Activated CD4-positive, alpha-beta T cell treated with anti-CD3 and anti-CD28 coated beads for 36 hours (primary cell): ENCODE measurements at regions of chr14 and their contacts with region 1.

Region 1: DNA sequence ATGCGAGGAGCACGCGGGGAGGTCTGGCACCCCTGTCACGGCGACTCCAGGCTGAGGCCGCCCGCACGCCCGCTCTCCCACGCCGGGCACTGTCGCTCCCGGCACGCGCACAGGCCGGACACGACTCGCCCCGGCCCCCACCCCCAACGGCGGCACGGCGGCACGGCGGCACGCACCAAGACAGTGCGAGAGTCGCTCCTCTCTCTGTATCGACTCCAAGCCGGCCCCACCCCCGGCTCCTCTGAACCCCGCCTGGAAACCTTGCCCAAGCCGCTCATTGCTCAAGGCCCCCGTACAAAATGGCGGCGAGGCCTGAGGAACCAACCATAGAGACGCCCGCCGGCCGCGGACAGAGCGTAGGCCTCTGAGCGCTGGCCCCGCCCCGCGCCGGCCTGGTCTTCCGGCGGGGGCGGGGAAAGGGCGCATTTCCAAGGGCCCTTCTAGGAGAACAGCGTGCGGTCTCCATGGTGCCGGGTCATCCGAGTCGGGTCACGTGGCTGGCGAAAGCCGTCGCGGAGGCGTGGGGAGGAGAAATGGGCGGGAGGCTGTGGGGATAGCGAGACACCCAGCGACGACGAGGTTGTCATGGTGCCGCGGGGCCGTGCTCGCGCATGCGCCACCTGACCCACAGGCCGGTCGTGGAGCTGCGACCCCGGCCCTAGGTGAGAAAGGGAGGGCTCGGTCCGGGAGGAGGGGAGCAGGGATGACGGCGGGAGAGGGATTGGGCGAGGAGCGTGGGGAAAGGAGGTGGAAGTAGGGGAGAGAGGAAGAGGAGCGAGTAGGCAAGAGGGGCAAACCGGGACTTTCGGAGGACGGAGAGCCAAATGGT is at the start of gene CIPC:
- DNase-seq: peak; percentile 100
- ATAC-seq: peak; percentile 91
- H3K4me3 Mint-ChIP-seq: peak within 1 kb of the TSS; percentile 87
- H3K27ac Mint-ChIP-seq: peak within 1 kb of the TSS; percentile 99
- H3K4me1 Mint-ChIP-seq: peaks cover 40% of the 10 kb centered on the region
- H3K27me3 Mint-ChIP-seq: no peaks in the 10 kb centered on the region
- total RNA-seq, gene CIPC: 8.6 to 10.0 TPM

Region 2: GRCh38 chr14:75982266-75983018 is 1115.5 kb before region 1 on chr14:
- CTCF ChIA-PET with region 1: no interaction called
- POLR2A ChIA-PET with region 1: no interaction called
- intact Hi-C with region 1: loop called in 1 of 2 experiments (anchors 10 kb)
- DNase-seq: peak; percentile 86
- ATAC-seq: peak; percentile 62
- H3K4me3 Mint-ChIP-seq: peak overlapping the region; percentile 67
- H3K27ac Mint-ChIP-seq: peak overlapping the region; percentile 78
- H3K4me1 Mint-ChIP-seq: peaks cover 42% of the 10 kb centered on the region
- H3K27me3 Mint-ChIP-seq: no peaks in the 10 kb centered on the region

Region 3: DNA sequence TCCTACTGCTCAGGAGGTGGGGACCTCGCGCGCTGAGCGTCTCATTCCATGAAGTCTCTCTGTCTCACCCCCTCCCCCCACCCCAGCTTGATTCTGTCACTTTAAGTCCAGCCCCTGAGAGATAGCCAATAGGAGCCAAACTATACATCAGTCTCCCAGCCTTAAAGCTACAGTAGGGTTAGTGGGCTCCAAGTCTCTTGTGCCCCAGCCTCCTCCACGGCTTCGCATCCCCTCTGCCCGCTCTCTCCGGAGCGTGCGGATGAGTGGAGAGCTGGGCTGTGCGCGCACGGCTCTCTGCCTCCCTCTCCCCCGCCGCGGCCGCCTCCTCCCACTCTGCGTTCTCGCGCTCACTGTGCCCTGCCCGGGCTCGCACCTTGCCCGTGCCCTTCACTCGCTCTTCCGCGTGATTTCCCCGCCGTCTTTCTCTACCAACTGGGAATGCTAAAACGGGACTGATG is 721.9 kb before region 1 on chr14 and contains the start of gene ESRRB:
- CTCF ChIA-PET with region 1: no interaction called
- POLR2A ChIA-PET with region 1: no interaction called
- intact Hi-C with region 1: no loop called
- DNase-seq: no peak
- ATAC-seq: peak; percentile 33
- H3K4me3 Mint-ChIP-seq: no peak within 1 kb of the TSS
- H3K27ac Mint-ChIP-seq: no peak within 1 kb of the TSS
- H3K4me1 Mint-ChIP-seq: peaks cover 2% of the 10 kb centered on the region
- H3K27me3 Mint-ChIP-seq: peaks cover 44% of the 10 kb centered on the region
- total RNA-seq, gene ESRRB: 0.11 to 0.14 TPM

Region 4: DNA sequence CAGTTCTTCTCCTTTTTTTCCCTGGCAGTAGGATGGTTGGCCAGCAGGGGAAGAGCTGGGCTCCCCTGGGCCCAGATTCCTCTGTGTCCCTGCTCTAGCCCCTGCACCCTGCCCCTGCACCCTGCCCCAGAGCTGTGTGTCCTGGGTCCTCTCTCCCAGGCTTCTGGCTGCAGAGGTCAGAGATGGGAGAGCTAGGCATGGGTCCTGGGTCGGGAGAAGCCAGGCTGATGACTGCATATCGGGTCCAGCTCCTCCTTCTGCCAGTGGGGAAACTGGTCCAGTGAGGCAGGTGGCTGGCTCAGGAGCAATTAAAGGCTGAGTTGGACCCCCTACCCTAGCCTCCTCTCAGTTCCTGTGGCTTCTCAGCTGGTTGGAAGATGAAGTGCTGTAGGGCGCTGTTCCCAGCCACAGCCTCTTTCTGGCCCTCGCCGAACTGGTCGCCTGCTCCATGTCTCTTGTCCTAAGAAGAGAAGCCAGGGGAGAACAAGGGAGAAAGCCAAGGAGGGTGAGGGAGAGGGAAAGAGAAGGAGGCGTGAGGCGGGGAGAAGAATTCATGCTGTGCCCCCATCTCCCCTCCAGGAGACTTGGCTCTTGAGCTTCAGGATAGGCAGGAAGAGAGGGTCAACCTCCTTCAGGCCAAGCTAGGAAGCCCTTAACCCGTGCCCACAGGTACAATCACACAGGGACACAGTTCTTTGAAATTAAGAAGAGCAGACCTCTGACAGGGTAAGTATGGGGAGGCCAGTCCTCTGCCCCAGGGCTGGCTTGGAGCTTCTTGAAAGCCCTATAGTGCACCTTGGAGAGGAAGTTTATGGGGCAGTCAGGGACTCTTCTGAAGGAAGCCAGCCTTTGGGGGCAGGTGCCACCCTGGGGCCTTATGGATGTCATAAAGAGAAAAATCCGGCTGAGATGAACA is 327.1 kb before region 1 on chr14:
- CTCF ChIA-PET with region 1: no interaction called
- POLR2A ChIA-PET with region 1: no interaction called
- intact Hi-C with region 1: no loop called
- DNase-seq: no peak
- ATAC-seq: no peak
- H3K4me3 Mint-ChIP-seq: no peak overlapping the region
- H3K27ac Mint-ChIP-seq: no peak overlapping the region
- H3K4me1 Mint-ChIP-seq: peaks cover 24% of the 10 kb centered on the region
- H3K27me3 Mint-ChIP-seq: no peaks in the 10 kb centered on the region

Region 5: DNA sequence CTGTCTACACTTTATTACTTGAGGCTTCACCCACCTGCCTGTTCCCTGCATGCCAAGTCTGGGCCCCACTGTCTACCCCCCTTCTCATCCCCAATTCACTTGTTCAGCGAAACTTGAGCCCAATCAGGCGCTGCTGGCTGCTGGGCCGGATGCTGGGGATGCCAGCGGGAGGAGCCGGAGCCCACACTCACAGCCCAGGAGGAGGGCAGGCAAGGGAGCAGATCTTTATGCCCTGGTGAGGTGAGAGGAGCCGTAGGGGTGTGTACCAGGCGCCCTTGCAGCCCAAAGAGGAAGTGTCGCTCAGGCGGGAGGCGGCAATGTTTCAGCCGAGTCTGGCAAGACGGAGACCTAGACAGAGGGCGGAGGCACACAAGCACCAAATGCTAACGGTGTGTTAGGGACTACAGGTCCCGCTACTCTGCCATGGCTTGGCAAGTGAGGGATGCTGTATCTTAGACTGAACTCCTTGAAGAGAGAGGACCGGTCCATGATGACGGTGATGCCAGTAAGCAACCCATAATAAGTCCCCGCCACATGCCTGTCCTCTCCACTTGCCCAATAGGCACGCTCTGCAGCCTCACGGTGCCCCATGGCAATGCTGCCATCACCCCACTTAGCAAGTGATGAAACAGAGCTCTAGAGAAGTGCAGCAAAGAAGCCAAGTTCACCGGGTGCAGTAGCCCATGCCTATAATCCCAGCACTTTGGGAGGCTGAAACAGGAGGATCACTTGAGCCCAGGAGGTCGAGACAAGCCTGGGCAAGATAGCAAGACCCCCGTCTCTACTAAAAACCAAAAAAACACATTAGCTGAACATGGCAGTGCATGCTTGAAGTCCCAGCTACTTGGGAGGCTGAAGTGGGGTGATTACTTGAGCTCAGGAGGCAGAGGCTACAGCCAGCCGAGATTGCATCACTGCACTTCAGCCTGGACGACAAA is 230.1 kb before region 1 on chr14:
- CTCF ChIA-PET with region 1: interaction called, 97 read pairs
- POLR2A ChIA-PET with region 1: no interaction called
- intact Hi-C with region 1: loop called in 1 of 2 experiments (anchors 1 kb)
- DNase-seq: peak; percentile 65
- ATAC-seq: peak; percentile 83
- H3K4me3 Mint-ChIP-seq: peak overlapping the region; percentile 8
- H3K27ac Mint-ChIP-seq: peak overlapping the region; percentile 58
- H3K4me1 Mint-ChIP-seq: peaks cover 38% of the 10 kb centered on the region
- H3K27me3 Mint-ChIP-seq: no peaks in the 10 kb centered on the region

Region 6: DNA sequence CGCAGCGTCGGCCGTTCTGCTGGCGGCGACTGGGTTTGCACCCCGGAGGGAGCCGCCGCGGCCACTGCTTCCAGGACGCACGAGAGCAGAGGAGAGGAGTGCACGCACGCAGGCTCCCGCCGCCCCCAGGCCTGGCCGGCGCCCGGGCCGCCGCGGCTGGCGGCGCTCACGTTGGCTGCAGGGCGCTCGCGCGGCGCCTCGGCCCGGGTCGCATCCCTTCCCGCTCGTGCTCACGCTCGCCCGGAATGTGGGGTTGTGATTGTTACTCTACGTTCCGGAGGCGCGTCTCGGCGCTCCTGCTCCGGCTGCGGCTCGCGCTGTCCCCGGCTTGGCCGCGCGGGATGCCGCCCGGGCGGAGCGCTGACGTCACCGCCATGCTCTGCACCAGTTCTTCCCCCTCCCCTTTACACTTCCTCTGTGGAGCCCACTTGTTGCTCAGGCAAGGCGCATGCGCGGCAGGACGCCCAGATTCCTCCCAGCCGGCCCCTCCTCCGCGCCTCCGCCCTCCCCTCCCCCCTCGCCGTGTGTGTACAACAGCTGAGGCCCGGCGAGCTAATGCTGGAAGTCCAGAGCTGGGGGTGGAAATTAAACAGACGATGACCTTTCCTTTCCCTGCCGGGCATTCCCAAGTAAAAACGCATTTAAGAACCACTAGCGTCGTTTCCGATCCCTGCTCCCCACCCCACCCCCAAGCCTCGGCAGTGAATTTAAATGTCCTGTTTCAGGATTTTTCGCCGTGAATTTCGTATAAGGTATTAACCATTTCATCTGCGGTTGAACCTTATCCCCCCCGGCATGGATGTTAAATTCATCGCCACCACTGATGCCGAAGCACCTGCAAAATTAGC is 69.3 kb before region 1 on chr14 and contains the start of gene IRF2BPL:
- CTCF ChIA-PET with region 1: interaction called, 3 read pairs
- POLR2A ChIA-PET with region 1: no interaction called
- intact Hi-C with region 1: loop called (anchors 1 to 2 kb)
- DNase-seq: peak; percentile 97
- ATAC-seq: peak; percentile 67
- H3K4me3 Mint-ChIP-seq: peak within 1 kb of the TSS; percentile 88
- H3K27ac Mint-ChIP-seq: peak within 1 kb of the TSS; percentile 97
- H3K4me1 Mint-ChIP-seq: peaks cover 54% of the 10 kb centered on the region
- H3K27me3 Mint-ChIP-seq: no peaks in the 10 kb centered on the region
- total RNA-seq, gene IRF2BPL: 34.3 to 40.1 TPM

Region 7: DNA sequence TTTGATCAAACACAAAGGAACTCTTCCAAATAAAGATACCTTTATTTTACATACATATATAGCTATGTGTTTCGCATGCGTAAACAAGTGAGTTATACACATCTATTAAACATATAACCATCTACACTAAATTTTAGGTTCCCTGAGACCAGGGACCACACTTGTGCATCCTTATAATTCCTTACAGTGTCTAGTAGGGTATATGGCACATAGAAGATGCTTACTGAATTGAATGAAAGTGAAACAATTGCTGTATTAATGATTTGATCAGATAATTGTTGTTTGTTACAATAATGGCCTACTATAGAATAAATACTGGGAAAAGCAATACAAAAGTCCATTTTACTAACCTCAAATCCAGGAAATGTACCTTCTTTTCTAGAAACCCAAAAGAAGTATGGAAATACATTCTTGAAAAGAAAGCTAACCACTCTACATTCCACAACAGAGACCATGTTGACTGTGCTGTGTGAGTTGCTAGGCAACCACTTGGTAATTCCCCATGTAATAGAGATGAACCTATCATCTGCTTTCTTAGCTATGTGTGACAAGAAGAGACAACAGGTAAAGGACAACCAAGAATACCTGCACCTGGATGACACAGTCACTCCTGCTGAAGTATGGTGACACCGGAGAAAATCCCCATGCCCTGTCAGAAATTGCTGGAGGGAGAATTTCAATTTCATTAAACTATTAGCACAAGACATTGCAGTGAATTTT is 11.7 kb before region 1 on chr14:
- CTCF ChIA-PET with region 1: interaction called, 30 read pairs
- POLR2A ChIA-PET with region 1: no interaction called
- intact Hi-C with region 1: no loop called
- DNase-seq: no peak
- ATAC-seq: peak; percentile 83
- H3K4me3 Mint-ChIP-seq: no peak overlapping the region
- H3K27ac Mint-ChIP-seq: no peak overlapping the region
- H3K4me1 Mint-ChIP-seq: peaks cover 16% of the 10 kb centered on the region
- H3K27me3 Mint-ChIP-seq: peaks cover under 1% of the 10 kb centered on the region

Region 8: GRCh38 chr14:77320238-77320935 is 222.5 kb after region 1 on chr14 and contains the start of gene POMT2:
- CTCF ChIA-PET with region 1: interaction called, 6 read pairs
- POLR2A ChIA-PET with region 1: interaction called, 4 read pairs
- intact Hi-C with region 1: loop called (anchors 1 kb)
- DNase-seq: peak; percentile 95
- ATAC-seq: peak; percentile 53
- H3K4me3 Mint-ChIP-seq: peak within 1 kb of the TSS; percentile 92
- H3K27ac Mint-ChIP-seq: peak within 1 kb of the TSS; percentile 99
- H3K4me1 Mint-ChIP-seq: peaks cover 19% of the 10 kb centered on the region
- H3K27me3 Mint-ChIP-seq: no peaks in the 10 kb centered on the region
- total RNA-seq, gene POMT2: 11.7 to 18.2 TPM

Region 9: DNA sequence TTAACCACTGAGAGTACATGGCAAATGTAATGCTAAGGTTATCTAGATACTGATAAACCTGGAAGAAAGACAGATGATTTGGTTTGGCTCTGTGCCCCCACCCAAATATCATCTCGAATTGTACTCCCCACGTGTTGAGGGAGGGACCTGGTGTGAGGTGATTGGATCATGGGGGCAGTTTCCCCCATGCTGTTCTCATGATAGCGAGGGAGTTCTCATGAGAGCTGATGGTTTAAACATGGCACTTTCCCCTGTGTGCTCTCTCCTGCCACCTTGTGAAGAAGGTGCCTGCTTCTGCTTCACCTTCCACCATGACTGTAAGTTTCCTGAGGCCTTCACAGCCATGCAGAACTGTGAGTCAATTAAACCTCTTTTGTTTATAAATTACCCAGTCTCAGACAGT is 311.2 kb after region 1 on chr14:
- CTCF ChIA-PET with region 1: no interaction called
- POLR2A ChIA-PET with region 1: no interaction called
- intact Hi-C with region 1: no loop called
- DNase-seq: peak; percentile 21
- ATAC-seq: peak; percentile 39
- H3K4me3 Mint-ChIP-seq: no peak overlapping the region
- H3K27ac Mint-ChIP-seq: no peak overlapping the region
- H3K4me1 Mint-ChIP-seq: peaks cover 11% of the 10 kb centered on the region
- H3K27me3 Mint-ChIP-seq: no peaks in the 10 kb centered on the region

Region 10: DNA sequence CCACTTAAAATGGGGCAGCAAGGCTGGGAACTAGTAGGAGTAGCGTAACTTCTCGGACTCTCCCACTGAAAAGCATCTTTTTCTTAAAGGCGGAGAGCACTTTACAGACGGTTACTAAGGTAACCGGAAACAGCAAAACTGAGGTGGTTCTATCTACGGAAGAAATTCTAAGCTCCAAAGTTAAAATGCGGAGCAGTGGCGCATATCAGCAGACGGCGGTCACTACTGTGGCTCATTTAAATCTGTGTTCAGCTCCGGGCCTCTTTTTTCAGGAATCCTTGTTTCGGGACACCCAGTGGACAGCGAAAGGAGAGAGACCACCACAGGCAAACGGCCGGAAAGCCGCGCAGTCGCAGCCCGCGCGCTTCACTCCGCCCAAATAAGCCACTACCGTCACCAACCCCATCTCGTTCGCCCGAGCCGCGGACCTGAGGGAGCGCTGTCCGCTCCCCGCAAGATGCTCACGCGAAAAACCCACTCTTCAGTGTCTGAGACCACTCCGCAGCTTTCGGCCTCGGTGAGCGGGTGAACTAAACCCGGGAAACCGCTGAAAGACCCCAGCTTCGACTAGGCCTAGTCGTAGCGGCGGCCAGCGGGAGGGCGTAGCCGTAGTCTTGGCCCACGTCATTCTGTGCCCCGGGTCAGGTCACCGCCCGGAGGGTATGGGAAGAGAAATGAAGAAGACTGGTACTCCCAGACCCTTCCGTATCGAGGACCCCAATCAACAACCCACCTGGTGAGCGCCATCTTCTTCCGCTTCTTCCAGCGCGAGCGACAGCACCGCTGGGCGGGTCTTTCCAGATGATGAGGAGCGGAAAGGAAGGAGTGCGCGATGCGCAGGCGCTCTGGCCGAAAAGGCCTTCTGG is 662.7 kb after region 1 on chr14 and contains the start of gene SNW1:
- CTCF ChIA-PET with region 1: no interaction called
- POLR2A ChIA-PET with region 1: no interaction called
- intact Hi-C with region 1: loop called in 1 of 2 experiments (anchors 1 kb)
- DNase-seq: peak; percentile 95
- ATAC-seq: peak; percentile 96
- H3K4me3 Mint-ChIP-seq: peak within 1 kb of the TSS; percentile 96
- H3K27ac Mint-ChIP-seq: peak within 1 kb of the TSS; percentile 98
- H3K4me1 Mint-ChIP-seq: peaks cover 33% of the 10 kb centered on the region
- H3K27me3 Mint-ChIP-seq: no peaks in the 10 kb centered on the region
- total RNA-seq, gene SNW1: 134 to 135 TPM